Cardiac septum (tissue), 1 donor: ENCODE measurements at regions of chr6 and their contacts with region 1.

Region 1: DNA sequence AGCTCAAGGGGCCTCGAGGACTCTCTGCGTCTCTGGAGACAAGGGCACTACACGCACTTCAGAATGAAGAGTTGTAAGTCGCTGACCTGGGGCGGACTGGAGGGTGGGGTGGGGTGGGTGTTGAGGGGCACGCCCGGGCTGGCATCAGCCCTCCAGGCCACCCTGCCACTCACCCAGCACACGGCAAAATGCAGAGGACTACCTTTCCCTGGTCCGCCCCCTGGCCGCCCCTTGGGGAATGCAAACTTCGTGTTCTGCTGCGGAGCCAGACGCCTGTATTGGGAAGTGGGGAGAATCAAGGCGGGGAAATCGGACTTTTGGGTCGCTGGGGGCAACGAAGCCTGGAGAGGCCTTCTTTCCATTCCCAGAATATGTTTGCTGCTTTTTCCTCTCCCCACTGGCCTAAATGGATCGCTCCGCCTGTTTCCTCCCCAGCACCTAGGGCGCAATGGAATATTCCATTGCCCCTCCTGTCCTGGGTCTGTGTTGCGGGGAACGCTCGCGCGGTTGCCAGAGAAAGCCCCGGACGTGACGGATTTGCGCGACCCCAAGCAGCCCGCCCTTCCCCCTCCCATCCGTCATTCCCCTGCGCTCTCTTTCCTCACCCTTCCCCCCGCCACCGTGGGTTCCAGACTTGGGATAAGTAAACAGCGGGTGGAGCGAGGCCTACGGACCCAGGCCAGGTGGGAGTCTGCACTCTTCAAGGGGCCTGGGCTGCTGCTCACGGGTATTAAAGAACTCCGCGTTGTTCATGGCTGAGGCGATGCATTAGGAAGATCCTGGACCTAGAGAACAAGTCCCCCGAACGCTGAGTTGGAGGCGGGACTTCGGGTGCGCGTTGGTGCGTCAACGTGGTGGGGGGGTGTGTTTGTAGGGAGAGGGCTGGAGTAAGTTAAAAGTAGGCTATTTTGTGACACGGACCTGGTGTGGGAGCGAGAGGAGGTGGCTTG is at the start of gene PPT2:
- DNase-seq: peak; percentile 91
- total RNA-seq, gene PPT2: 15.6 TPM

Region 2: GRCh38 chr6:31784098-31784925 is 369.5 kb before region 1 on chr6:
- intact Hi-C with region 1: no loop called
- DNase-seq: no peak

Region 3: DNA sequence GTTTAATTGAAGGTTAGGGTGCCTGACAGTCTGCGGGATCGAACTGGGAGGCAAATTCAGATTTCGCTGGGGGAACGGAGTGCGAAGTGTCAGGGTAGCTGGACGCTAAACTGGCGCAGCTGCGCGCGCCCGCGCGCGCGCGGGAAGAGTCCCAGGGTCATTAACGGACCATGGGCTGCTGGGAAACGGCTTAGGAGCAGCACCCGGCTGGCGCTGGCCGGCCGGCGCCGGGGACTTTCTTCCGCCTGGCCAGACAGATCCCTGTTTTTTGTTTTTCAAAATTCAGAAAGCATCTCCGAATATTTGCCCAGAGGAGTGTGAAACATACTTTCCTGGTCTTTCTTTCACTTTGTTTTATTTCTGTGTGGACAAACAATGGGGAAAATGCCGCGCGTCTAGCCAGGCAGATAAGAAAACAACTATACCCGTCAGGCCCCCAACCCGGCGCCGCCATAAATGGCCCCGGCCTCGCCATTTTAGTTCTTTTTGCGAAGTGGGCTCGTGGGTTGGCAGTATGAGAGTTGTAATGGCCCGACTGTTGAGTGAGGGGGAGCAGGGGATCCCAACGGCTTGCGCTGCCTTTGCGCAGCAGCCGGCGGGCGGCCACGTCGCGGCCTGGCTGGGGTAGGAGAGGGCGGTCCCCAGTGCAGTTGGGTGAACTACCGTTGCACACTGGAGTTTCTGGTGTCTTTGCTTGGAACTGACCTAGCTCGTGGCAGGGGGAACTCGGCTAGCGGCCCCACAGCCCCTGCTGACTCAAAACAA is 319.2 kb before region 1 on chr6:
- intact Hi-C with region 1: no loop called
- DNase-seq: peak; percentile 93

Region 4: GRCh38 chr6:32058511-32058963 is 95.3 kb before region 1 on chr6:
- intact Hi-C with region 1: no loop called
- DNase-seq: no peak

Region 5: DNA sequence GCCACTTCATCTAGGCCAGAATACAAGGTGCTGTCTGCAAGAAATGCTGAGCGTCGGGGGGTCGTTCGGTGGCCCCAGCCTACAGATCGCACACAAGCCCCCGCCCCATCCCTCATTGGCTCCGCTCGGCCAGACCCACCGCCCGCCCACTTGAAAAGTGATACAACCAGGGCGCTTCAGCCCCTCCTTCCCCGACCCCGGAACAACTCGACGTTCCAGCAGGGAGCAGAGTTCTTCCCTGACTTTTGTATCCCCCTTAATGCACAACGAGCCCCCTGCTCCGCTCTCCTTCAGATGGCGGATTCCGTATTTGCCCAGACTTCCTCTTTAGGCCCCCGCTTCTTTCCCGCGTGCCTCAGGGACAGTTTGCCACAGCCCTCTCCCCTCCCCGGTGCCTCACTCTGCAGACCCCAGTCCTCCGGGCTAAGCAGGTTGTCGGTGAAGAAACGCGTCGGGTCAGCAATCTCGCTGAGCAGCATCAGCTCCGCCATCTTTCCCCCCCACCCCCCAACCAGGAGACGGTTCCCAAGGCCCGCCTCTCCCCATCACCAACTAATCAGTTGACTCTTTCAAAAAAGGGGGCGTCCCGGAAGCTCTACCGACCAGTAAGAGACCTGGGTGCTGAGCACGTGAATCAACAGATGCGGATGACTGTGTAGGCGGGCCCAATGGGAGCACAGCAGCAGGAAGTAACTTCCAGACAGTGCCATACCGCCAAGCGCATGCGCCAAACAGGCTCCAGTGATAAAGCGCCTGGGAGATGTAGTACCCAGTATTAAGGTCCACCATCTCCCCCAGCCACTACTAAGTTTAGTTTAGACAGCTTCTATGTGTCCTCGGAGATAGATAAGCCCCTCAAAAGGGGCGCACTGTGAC is 25.9 kb before region 1 on chr6 and contains the start of gene ATF6B:
- intact Hi-C with region 1: loop called (anchors 2 kb)
- DNase-seq: peak; percentile 99
- total RNA-seq, gene ATF6B: 40.8 TPM

Region 6: DNA sequence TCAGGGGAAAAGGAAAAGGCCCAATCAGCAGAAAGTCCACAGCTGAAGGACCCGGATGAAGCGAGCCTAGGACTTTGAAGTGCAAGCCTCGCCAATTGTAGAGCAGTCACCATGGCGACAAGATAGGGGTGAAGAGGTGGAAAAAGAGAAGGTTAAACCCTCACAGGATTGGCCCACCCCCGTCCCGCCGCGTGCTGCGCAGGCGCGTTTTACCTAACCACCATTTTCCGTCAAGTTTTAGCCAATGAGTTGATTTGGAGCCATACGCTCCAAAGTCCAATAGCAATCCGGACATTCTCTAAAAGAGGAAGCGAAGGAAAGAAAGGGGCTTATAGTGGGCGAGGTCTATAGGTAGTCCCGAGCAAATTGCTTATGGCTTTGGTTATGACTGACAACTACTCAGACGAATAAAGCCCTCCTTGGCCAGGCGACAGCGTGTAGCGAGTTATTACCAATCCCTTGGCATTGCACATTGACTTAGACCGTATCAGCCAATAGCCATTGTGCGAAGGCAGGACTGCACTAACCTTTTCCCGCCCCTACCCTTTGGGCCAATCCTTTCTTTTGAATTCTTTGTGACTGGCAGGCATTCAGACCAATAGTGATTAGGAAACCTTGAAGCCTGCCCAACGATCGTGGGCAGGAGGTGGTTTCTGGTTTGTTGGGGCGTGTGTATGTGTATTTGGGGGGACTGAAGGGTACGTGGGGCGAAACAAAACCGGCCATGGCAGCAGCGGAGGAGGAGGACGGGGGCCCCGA is 24.1 kb after region 1 on chr6 and contains the start of gene RNF5:
- intact Hi-C with region 1: loop called (anchors 2 kb)
- DNase-seq: peak; percentile 96
- total RNA-seq, gene RNF5: 60.7 TPM